Posterior vena cava (tissue), 2 donors: ENCODE measurements at regions of chr22 and their contacts with region 1.

Region 1: GRCh38 chr22:20194681-20195593 is 44.1 kb upstream of the CCDC188 start:
- DNase-seq: no peak

Region 2: GRCh38 chr22:20174785-20175596 is 19.9 kb before region 1 on chr22:
- intact Hi-C with region 1: loop called in 1 of 2 experiments (anchors 1 kb)
- DNase-seq: no peak

Region 3: GRCh38 chr22:20229916-20230775 is 35.2 kb after region 1 on chr22:
- intact Hi-C with region 1: loop called in 1 of 2 experiments (anchors 5 kb)
- DNase-seq: no peak